B cell (primary cell): ENCODE measurements at regions of chr16 and their contacts with region 1.

Region 1: DNA sequence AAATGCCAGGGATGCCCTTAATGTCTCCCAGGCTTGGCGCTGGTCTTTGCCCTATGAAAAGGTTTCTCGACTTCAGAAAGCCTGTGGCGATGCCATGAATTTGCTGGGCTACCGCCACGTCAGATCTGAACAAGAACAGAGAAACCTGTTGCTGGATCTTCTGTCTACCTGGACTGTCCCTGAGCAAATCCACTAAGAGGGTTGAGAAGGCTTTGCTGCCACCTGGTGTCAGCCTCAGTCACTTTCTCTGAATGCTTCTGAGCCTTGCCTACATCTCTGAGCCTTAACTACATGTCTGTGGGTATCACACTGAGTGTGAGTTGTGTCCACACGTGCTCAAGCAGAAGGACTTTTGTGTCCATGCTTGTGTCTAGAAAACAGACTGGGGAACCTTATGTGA is 11.4 kb downstream of the CHST4 start:
- DNase-seq: peak; percentile 64
- ATAC-seq: peak; percentile 73
- H3K4me3 ChIP-seq: no peak overlapping the region
- H3K4me3 Mint-ChIP-seq: no peak overlapping the region
- H3K27ac ChIP-seq: no peak overlapping the region
- H3K27ac Mint-ChIP-seq: no peak overlapping the region
- H3K4me1 ChIP-seq: peaks cover 13 to 15% of the 10 kb centered on the region in 2 donors
- H3K4me1 Mint-ChIP-seq: peaks cover 15% of the 10 kb centered on the region
- H3K27me3 ChIP-seq: peaks cover 0 to 7% (median 2%) of the 10 kb centered on the region in 4 experiments
- H3K27me3 Mint-ChIP-seq: peaks cover 13% of the 10 kb centered on the region
- CTCF ChIP-seq: peak; percentile 80

Region 2: GRCh38 chr16:71327720-71328119 is 209.9 kb before region 1 on chr16:
- CTCF ChIA-PET with region 1: no interaction called
- POLR2A ChIA-PET with region 1: no interaction called
- intact Hi-C with region 1: no loop called
- DNase-seq: no peak
- ATAC-seq: no peak
- H3K4me3 ChIP-seq: no peak overlapping the region
- H3K4me3 Mint-ChIP-seq: no peak overlapping the region
- H3K27ac ChIP-seq: no peak overlapping the region
- H3K27ac Mint-ChIP-seq: no peak overlapping the region
- H3K4me1 ChIP-seq: no peaks in the 10 kb centered on the region
- H3K4me1 Mint-ChIP-seq: no peaks in the 10 kb centered on the region
- H3K27me3 ChIP-seq: peaks cover 0 to 8% (median 2%) of the 10 kb centered on the region in 4 experiments
- H3K27me3 Mint-ChIP-seq: peaks cover 8% of the 10 kb centered on the region
- CTCF ChIP-seq: no peak

Region 3: GRCh38 chr16:71526111-71526631 is 11.5 kb before region 1 on chr16 and contains the start of gene CHST4:
- CTCF ChIA-PET with region 1: interaction called, 12 read pairs
- POLR2A ChIA-PET with region 1: no interaction called
- intact Hi-C with region 1: no loop called
- DNase-seq: no peak
- ATAC-seq: no peak
- H3K4me3 ChIP-seq: no peak within 1 kb of the TSS
- H3K4me3 Mint-ChIP-seq: peak within 1 kb of the TSS; percentile 45
- H3K27ac ChIP-seq: no peak within 1 kb of the TSS
- H3K27ac Mint-ChIP-seq: no peak within 1 kb of the TSS
- H3K4me1 ChIP-seq: no peaks in the 10 kb centered on the region
- H3K4me1 Mint-ChIP-seq: peaks cover 6% of the 10 kb centered on the region
- H3K27me3 ChIP-seq: peaks cover 0 to 37% (median 6%) of the 10 kb centered on the region in 4 experiments
- H3K27me3 Mint-ChIP-seq: peaks cover 60% of the 10 kb centered on the region
- CTCF ChIP-seq: no peak
- total RNA-seq, gene CHST4: not detected in 2 replicates